ENCODE measurements at regions of chr1 and their contacts with region 1.

Region 1: DNA sequence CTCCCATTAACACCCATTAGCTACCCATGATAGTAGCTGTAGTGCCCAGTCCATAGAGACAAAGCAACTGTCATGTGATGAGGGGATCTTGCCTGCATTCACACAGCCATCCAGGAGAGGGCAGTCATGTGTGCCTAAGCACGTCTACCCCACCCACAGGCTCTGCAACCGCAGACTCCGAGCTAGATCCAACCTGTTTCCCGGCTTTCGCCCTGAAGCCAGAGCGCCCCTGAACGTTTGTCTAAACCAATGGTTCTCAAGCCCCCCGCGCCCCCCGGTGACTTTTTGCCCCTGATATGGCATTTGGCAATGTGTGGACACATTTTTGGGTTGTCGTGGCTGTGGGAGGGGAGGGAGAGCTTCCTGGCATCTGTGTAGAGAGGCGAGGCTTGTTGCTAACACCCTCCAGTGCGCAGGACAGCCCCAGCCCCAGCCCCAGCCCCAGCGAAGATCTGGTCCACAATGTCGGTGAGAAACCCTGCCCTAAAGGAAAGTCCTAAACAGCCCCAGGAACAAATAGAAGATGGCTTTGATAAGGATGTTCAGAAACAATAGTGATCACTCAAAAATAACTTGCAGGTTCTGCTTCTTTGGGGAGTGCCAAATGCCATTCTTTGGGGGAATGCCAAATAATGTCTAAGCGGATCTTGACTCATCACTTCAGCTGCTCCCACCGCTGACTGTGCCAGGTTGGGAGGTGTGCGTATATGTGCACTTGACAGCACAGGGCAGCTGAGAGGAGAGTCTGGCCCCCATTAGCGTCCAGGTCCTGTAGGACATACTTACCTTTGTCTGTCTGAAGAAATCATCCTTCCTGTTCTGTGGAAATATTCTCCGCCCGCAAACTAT is 34.5 kb downstream of the SLC44A3 start:
- DNase-seq: peak; percentile 81
- H3K4me3 Mint-ChIP-seq: no peak overlapping the region
- H3K27ac Mint-ChIP-seq: no peak overlapping the region
- H3K4me1 Mint-ChIP-seq: no peaks in the 10 kb centered on the region
- H3K27me3 Mint-ChIP-seq: peaks cover 7% of the 10 kb centered on the region

Region 2: GRCh38 chr1:94836891-94837290 is 17.8 kb before region 1 on chr1:
- CTCF ChIA-PET with region 1: interaction called, 13 read pairs
- POLR2A ChIA-PET with region 1: no interaction called
- DNase-seq: no peak
- H3K4me3 Mint-ChIP-seq: no peak overlapping the region
- H3K27ac Mint-ChIP-seq: no peak overlapping the region
- H3K4me1 Mint-ChIP-seq: no peaks in the 10 kb centered on the region
- H3K27me3 Mint-ChIP-seq: peaks cover 11% of the 10 kb centered on the region

Region 3: DNA sequence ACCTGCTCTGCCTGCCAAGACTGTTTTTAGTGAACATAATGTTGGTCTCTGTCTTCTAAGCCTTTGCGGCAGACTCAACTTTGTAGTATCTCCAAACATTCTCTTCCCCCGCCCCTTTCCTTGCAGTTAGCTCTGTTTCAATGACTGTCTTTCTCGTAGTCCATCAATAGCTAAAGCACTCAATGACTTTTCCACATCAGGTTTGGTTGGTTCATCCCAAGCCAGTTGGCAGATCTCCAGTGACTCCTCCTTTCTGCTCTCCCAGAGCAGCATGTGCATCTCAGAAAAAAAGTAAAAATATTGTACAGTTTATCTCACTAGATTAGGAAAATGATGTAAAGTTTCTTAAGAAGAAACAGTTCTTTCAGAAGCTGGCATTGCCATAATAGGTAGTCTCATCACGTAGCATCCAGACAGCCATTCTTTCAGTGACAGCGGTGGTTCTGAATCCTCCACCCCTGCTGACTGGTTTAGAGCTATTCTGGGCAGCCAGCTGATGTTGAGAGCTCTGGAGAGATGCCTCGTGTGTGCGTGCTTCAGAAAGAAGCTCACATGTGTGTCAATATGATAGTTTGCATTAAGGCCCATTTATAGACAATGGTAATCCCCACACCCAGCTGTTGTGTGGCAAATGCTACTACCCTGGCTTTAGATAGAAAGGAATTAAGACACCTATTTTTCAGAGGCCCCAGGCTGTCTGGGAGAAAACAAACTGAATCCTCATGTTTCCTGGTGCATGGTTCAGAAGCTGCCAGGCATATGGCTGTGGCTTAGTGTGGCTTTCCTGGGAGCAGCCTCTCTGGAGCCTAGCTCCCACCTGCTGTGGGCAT is 19.1 kb after region 1 on chr1:
- CTCF ChIA-PET with region 1: interaction called, 11 read pairs
- POLR2A ChIA-PET with region 1: no interaction called
- DNase-seq: no peak
- H3K4me3 Mint-ChIP-seq: no peak overlapping the region
- H3K27ac Mint-ChIP-seq: no peak overlapping the region
- H3K4me1 Mint-ChIP-seq: peaks cover 6% of the 10 kb centered on the region
- H3K27me3 Mint-ChIP-seq: peaks cover 6% of the 10 kb centered on the region

Region 4: DNA sequence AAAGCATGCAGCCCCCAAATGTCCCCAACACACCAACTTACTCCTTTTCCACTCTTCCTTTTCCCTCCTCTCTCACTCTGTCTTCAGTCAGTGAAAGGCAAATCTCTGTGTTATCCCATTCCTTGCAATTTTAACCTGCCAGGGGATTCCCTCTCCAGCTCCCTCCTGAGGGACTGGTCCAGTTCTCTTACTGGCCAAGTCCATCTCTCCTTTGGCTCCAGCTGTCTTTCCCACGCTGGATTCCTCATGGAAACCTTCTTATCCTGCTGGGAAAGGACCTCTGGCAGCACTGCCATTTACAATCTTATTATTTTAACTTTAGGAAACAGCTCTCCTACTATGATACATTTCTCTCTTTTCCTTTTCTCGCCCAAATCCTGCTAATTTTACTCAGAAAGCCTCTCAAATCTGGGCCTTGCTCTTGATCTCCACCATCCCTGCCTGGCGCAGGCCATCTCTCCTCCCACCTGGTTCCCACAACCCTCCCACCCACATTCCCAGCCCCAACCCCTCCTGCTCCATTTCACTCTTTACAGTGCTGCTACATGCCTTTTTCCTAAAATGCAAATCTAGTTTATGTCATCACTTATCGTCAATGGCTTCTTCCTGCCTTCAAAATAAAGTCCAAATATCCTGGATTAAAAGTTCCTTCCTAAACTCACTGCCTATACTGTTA is 144.9 kb after region 1 on chr1:
- CTCF ChIA-PET with region 1: interaction called, 10 read pairs
- POLR2A ChIA-PET with region 1: no interaction called
- DNase-seq: no peak
- H3K4me3 Mint-ChIP-seq: no peak overlapping the region
- H3K27ac Mint-ChIP-seq: no peak overlapping the region
- H3K4me1 Mint-ChIP-seq: no peaks in the 10 kb centered on the region
- H3K27me3 Mint-ChIP-seq: no peaks in the 10 kb centered on the region

Region 5: GRCh38 chr1:95043141-95043980 is 188.7 kb after region 1 on chr1:
- CTCF ChIA-PET with region 1: interaction called, 110 read pairs
- POLR2A ChIA-PET with region 1: interaction called, 6 read pairs
- DNase-seq: peak; percentile 79
- H3K4me3 Mint-ChIP-seq: no peak overlapping the region
- H3K27ac Mint-ChIP-seq: no peak overlapping the region
- H3K4me1 Mint-ChIP-seq: no peaks in the 10 kb centered on the region
- H3K27me3 Mint-ChIP-seq: no peaks in the 10 kb centered on the region

Region 6: DNA sequence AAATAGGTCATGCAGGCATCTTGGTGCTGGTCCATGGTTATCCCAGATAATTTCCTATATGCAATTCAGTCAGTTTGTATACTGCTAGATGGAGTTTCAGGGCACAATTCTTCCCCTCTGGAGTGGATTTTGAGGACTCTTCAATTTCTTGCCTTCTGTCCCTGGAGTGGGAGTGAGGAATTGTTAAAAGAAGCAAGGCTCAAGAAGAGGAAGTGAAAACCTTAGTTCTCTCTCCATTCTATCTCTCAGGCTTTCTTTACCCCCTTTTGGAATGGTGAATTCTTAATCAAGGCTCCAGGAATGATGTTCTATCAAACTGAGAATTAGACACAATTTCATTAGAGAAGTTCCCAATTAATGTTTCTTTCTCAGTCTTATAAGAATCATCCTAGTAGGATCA is 446.4 kb after region 1 on chr1:
- CTCF ChIA-PET with region 1: no interaction called
- POLR2A ChIA-PET with region 1: no interaction called
- DNase-seq: no peak
- H3K4me3 Mint-ChIP-seq: no peak overlapping the region
- H3K27ac Mint-ChIP-seq: no peak overlapping the region
- H3K4me1 Mint-ChIP-seq: no peaks in the 10 kb centered on the region
- H3K27me3 Mint-ChIP-seq: no peaks in the 10 kb centered on the region